CD4-positive, alpha-beta memory T cell (primary cell): ENCODE measurements at regions of chr5 and their contacts with region 1.

Region 1: GRCh38 chr5:101390151-101390908 is 487.2 kb upstream of the ST8SIA4 start:
- DNase-seq: peak in 3 of 5 donors; percentile 7 to 13 (median 9)
- H3K4me3 ChIP-seq: no peak overlapping the region
- H3K4me3 Mint-ChIP-seq: no peak overlapping the region
- H3K27ac ChIP-seq: no peak overlapping the region
- H3K27ac Mint-ChIP-seq: no peak overlapping the region
- H3K4me1 ChIP-seq: no peaks in the 10 kb centered on the region
- H3K4me1 Mint-ChIP-seq: no peaks in the 10 kb centered on the region
- H3K27me3 ChIP-seq: no peaks in the 10 kb centered on the region
- H3K27me3 Mint-ChIP-seq: no peaks in the 10 kb centered on the region

Region 2: DNA sequence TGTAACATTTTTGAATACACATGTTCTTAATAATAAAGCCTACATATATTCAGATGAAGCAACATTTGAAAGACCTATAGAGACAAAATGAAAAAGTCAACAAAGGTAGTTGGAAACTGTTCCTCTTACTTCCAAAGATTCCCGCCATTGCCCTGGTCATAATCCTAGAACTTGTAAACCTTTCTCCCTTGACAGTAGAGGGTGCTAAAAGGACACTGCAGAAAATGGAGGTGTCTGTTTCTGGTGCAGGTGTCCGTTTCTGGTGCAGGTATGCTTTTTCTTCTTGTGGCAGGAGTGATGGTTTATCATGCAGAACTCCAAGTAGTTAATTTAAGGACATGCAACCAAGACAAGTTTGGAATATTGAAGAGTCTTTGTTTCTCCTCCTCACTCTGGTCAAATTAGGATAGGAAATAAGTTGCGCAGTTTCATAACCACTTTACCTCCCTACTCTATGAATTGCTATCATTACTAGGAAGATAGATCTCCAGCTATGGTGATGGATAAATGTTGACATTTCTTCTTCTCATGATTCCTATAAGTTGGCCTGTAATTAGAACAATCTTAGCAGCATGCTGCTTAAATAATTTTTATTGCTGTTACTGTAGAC is 911.1 kb before region 1 on chr5:
- CTCF ChIA-PET with region 1: interaction called, 3 read pairs
- POLR2A ChIA-PET with region 1: no interaction called
- intact Hi-C with region 1: loop called (anchors 1 kb)
- DNase-seq: peak in 4 of 5 donors; percentile 26 to 34 (median 32)
- H3K4me3 ChIP-seq: no peak overlapping the region
- H3K4me3 Mint-ChIP-seq: no peak overlapping the region
- H3K27ac ChIP-seq: no peak overlapping the region
- H3K27ac Mint-ChIP-seq: no peak overlapping the region
- H3K4me1 ChIP-seq: no peaks in the 10 kb centered on the region
- H3K4me1 Mint-ChIP-seq: no peaks in the 10 kb centered on the region
- H3K27me3 ChIP-seq: no peaks in the 10 kb centered on the region
- H3K27me3 Mint-ChIP-seq: no peaks in the 10 kb centered on the region

Region 3: GRCh38 chr5:101404528-101404927 is 14.2 kb after region 1 on chr5:
- CTCF ChIA-PET with region 1: no interaction called
- POLR2A ChIA-PET with region 1: no interaction called
- intact Hi-C with region 1: no loop called
- DNase-seq: no peak
- H3K4me3 ChIP-seq: no peak overlapping the region
- H3K4me3 Mint-ChIP-seq: no peak overlapping the region
- H3K27ac ChIP-seq: no peak overlapping the region
- H3K27ac Mint-ChIP-seq: no peak overlapping the region
- H3K4me1 ChIP-seq: no peaks in the 10 kb centered on the region
- H3K4me1 Mint-ChIP-seq: no peaks in the 10 kb centered on the region
- H3K27me3 ChIP-seq: no peaks in the 10 kb centered on the region
- H3K27me3 Mint-ChIP-seq: peaks cover 0 to 1% of the 10 kb centered on the region in 2 donors

Region 4: GRCh38 chr5:102715082-102715819 is 1324.9 kb after region 1 on chr5:
- CTCF ChIA-PET with region 1: no interaction called
- POLR2A ChIA-PET with region 1: no interaction called
- intact Hi-C with region 1: no loop called
- DNase-seq: no peak
- H3K4me3 ChIP-seq: no peak overlapping the region
- H3K4me3 Mint-ChIP-seq: no peak overlapping the region
- H3K27ac ChIP-seq: no peak overlapping the region
- H3K27ac Mint-ChIP-seq: no peak overlapping the region
- H3K4me1 ChIP-seq: no peaks in the 10 kb centered on the region
- H3K4me1 Mint-ChIP-seq: no peaks in the 10 kb centered on the region
- H3K27me3 ChIP-seq: no peaks in the 10 kb centered on the region
- H3K27me3 Mint-ChIP-seq: peaks cover 4 to 8% of the 10 kb centered on the region in 2 donors

Region 5: GRCh38 chr5:102901424-102902134 is 1511.2 kb after region 1 on chr5:
- CTCF ChIA-PET with region 1: no interaction called
- POLR2A ChIA-PET with region 1: no interaction called
- intact Hi-C with region 1: no loop called
- DNase-seq: no peak
- H3K4me3 ChIP-seq: no peak overlapping the region
- H3K4me3 Mint-ChIP-seq: no peak overlapping the region
- H3K27ac ChIP-seq: no peak overlapping the region
- H3K27ac Mint-ChIP-seq: no peak overlapping the region
- H3K4me1 ChIP-seq: no peaks in the 10 kb centered on the region
- H3K4me1 Mint-ChIP-seq: peaks cover 0 to 5% (median under 1%) of the 10 kb centered on the region in 4 donors
- H3K27me3 ChIP-seq: no peaks in the 10 kb centered on the region
- H3K27me3 Mint-ChIP-seq: no peaks in the 10 kb centered on the region